ENCODE measurements at regions of chr5 and their contacts with region 1.

Region 1: GRCh38 chr5:37738057-37738691 is 101.7 kb downstream of the GDNF start:
- DNase-seq: no peak
- H3K4me3 Mint-ChIP-seq: no peak overlapping the region
- H3K27ac Mint-ChIP-seq: no peak overlapping the region
- H3K4me1 Mint-ChIP-seq: peaks cover 15% of the 10 kb centered on the region
- H3K27me3 Mint-ChIP-seq: no peaks in the 10 kb centered on the region

Region 2: GRCh38 chr5:37506722-37507121 is 231.5 kb before region 1 on chr5:
- CTCF ChIA-PET with region 1: no interaction called
- DNase-seq: no peak
- H3K4me3 Mint-ChIP-seq: no peak overlapping the region
- H3K27ac Mint-ChIP-seq: no peak overlapping the region
- H3K4me1 Mint-ChIP-seq: no peaks in the 10 kb centered on the region
- H3K27me3 Mint-ChIP-seq: no peaks in the 10 kb centered on the region

Region 3: GRCh38 chr5:37722236-37723146 is 15.7 kb before region 1 on chr5:
- CTCF ChIA-PET with region 1: interaction called, 17 read pairs
- DNase-seq: peak; percentile 30
- H3K4me3 Mint-ChIP-seq: no peak overlapping the region
- H3K27ac Mint-ChIP-seq: peak overlapping the region; percentile 46
- H3K4me1 Mint-ChIP-seq: peaks cover 24% of the 10 kb centered on the region
- H3K27me3 Mint-ChIP-seq: no peaks in the 10 kb centered on the region

Measured in activated naive CD4-positive, alpha-beta T cell treated with anti-CD3 and anti-CD28 coated beads, Interleukin-2, amount 10 ng/mL, durations not matched to agents 7 days and 5 days (primary cell).